Esophagus muscularis mucosa (tissue), 4 donors: ENCODE measurements at regions of chr22 and their contacts with region 1.

Region 1: DNA sequence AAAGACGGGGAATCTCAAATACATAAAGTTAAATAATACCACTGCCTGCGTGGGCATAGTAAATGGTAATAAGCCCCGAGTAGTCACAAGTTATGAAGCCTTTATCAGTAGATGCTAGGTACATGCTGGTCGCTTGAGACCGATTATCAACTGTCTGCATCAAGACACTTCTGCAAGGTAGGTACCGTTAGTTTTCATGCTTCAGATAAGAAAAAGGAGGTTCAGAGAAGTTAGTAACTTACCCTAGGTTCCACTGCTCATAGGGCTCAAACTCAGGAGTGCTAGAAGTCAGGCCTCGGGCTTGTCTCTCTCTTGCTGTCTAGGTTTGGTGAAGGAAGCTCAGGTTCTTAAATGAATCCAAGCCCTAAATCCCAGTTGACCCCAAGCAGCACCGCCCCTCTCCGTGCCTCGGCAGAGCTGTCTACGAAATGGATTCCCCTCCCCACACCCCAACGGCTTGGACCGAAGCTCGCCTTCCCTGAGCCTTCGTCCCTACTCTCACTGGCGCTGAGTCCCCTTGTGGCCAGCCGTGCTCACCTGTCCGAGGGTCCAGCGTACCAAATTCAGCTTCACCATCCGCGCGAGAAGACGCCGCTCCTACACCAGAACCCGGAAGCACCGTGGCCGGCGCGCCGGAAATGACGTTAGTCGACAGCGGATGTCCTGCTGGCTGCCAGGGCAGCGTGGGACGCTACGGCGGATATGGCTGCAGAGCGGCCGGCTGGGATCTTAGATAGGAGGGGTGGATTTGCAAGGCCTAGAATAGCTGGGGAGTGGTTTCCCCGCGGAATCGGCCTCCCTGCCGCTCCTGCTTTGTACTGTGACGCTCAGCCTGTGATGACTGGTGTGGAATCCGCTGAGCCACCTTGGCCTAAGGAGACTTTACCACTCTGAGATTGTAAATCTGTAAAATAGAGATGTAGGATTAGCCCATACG is at the start of gene TFIP11:
- DNase-seq: peak; percentile 99
- H3K4me3 ChIP-seq: peak within 1 kb of the TSS; percentile 76 to 89 (median 88)
- H3K27ac ChIP-seq: peak within 1 kb of the TSS; percentile 77 to 87 (median 84)
- H3K4me1 ChIP-seq: peaks cover 17 to 31% (median 26%) of the 10 kb centered on the region in 4 donors
- H3K27me3 ChIP-seq: no peaks in the 10 kb centered on the region
- CTCF ChIP-seq: no peak
- EP300 ChIP-seq: no peak
- POLR2A ChIP-seq: no peak
- total RNA-seq, gene TFIP11: 17.9 to 23.5 (median 20.4) TPM

Region 2: DNA sequence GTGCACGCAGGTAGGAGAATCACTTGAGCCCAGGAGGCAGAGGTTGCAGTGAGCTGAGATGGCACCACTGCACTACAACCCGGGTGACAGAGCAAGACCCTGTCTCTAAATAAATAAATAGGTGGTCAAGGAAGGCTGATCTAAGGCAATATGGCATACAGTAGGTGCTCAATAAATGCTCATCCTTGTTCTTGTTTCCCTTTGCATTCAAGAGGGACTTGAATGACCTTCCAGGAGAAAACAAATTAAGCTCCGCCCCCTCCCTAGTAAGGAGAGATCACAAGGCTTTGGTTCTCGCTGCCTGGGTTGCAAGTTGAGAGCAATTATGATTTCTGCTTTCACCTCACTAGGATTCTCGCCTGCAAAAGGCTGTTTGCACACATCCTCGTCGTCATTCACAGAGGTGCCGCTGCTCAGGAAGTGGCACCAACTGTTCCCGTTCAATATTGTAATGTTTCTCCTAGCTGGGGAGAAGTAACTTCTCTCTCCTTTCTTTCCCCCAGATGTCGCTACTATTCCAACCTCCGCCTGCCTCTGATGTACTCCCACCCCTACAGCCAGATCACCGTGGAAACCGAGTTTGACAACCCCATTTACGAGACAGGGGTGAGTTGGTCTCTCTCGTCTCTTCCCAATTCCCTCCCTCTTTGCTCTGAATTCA is 134.8 kb before region 1 on chr22:
- intact Hi-C with region 1: no loop called
- DNase-seq: no peak
- H3K4me3 ChIP-seq: no peak overlapping the region
- H3K27ac ChIP-seq: no peak overlapping the region
- H3K4me1 ChIP-seq: no peaks in the 10 kb centered on the region
- H3K27me3 ChIP-seq: peaks cover 0 to 74% (median 15%) of the 10 kb centered on the region in 4 donors
- CTCF ChIP-seq: no peak
- EP300 ChIP-seq: no peak
- POLR2A ChIP-seq: no peak

Region 3: GRCh38 chr22:26445577-26446275 is 66.4 kb before region 1 on chr22:
- intact Hi-C with region 1: no loop called
- DNase-seq: no peak
- H3K4me3 ChIP-seq: no peak overlapping the region
- H3K27ac ChIP-seq: no peak overlapping the region
- H3K4me1 ChIP-seq: peaks cover 0 to 17% (median 9%) of the 10 kb centered on the region in 4 donors
- H3K27me3 ChIP-seq: no peaks in the 10 kb centered on the region
- CTCF ChIP-seq: no peak
- EP300 ChIP-seq: no peak
- POLR2A ChIP-seq: no peak

Region 4: GRCh38 chr22:26483439-26484359 is 28.4 kb before region 1 on chr22 and contains the starts of genes HPS4 and SRRD:
- intact Hi-C with region 1: loop called (anchors 2 kb)
- DNase-seq: peak; percentile 95
- H3K4me3 ChIP-seq: peak within 1 kb of the TSS; percentile 76 to 98 (median 97)
- H3K27ac ChIP-seq: peak within 1 kb of the TSS; percentile 88 to 96 (median 94)
- H3K4me1 ChIP-seq: peaks cover 51 to 68% (median 61%) of the 10 kb centered on the region in 4 donors
- H3K27me3 ChIP-seq: no peaks in the 10 kb centered on the region
- CTCF ChIP-seq: peak in 1 of 3 experiments; percentile 26
- EP300 ChIP-seq: no peak
- POLR2A ChIP-seq: peak; percentile 83
- total RNA-seq, gene HPS4: 15.4 to 17.9 (median 17.5) TPM
- total RNA-seq, gene SRRD: 12.7 to 20.5 (median 15.2) TPM

Region 5: GRCh38 chr22:26573026-26573662 is 61.0 kb after region 1 on chr22:
- intact Hi-C with region 1: no loop called
- DNase-seq: no peak
- H3K4me3 ChIP-seq: no peak overlapping the region
- H3K27ac ChIP-seq: peak overlapping the region in 2 of 4 donors; percentile 27 to 44
- H3K4me1 ChIP-seq: peaks cover 0 to 27% (median 7%) of the 10 kb centered on the region in 4 donors
- H3K27me3 ChIP-seq: no peaks in the 10 kb centered on the region
- CTCF ChIP-seq: no peak
- EP300 ChIP-seq: no peak
- POLR2A ChIP-seq: no peak

Region 6: DNA sequence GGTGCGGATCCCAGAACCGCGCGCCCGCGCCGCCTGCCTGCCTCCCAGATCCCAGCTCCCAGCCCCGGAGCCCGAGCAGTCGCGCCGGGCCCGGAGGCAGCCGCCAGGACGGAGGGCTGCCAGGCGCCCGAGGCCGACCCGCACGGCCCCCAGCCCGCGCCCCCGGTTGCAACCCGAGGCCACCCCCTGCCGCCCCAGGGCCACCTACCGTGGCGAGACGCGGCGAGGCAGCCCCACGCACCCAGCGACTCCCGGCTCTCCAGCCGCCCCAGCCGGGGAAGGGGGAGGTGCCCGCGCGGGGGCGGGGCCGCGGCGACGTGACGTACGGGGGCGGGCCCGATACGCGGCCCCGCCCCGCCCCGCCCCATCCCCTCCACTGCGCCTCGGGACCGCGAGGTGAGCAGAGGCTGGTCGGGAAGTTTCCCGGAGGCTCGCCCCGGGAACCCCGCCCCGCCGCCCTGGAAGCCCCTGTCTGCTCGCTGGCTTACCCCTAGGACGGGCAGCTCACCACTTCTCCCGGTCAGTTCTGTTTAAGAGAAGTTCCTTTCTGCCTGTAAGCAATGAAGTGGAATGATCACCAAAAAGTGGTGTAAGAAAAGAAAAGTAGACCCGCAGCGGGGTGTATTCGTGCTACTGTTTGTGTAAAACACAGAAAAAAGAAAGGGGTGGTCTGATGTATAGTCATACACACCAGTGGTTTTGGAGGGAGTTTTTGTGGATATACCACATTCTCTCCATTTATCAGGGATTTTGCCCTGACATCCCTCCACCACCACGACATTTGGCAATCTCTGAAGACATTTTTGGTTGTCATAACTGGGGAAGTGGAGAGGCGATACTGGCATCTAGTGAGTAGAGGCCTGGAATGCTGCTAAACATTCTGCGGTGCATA is 78.0 kb after region 1 on chr22 and contains the start of gene TPST2:
- intact Hi-C with region 1: loop called (anchors 5 kb)
- DNase-seq: peak; percentile 94
- H3K4me3 ChIP-seq: peak within 1 kb of the TSS; percentile 74 to 93 (median 80)
- H3K27ac ChIP-seq: peak within 1 kb of the TSS; percentile 76 to 88 (median 80)
- H3K4me1 ChIP-seq: peaks cover 28 to 32% (median 29%) of the 10 kb centered on the region in 4 donors
- H3K27me3 ChIP-seq: peaks cover 0 to 5% (median 0%) of the 10 kb centered on the region in 4 donors
- CTCF ChIP-seq: peak in 2 of 3 experiments; percentile 4 to 7
- EP300 ChIP-seq: no peak
- POLR2A ChIP-seq: no peak
- total RNA-seq, gene TPST2: 22.0 to 30.9 (median 28.7) TPM

Region 7: DNA sequence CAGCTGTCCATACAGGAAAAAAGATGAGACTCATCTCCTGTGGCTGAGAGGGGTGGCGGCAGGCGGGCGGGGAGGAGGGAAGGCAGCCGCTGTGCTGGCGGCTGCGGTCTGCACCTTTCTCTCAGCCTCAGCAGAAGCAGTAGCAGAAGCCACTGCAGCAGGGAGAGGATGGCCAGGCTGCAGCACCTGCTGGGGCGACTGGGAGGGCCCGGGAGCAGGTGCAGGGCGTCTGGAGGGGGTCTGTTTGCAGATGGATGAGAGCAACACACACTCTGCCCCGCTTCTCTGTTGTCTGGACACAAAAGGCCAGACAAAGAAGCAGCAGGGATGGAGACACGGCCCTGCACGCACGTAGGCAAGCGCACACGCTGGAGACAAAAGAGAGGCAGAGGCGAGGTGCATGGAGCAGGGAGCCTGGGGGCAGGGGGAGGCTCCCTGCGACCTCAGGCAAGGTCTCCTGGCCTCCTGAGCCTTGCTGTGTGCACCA is 135.9 kb after region 1 on chr22:
- intact Hi-C with region 1: no loop called
- DNase-seq: no peak
- H3K4me3 ChIP-seq: no peak overlapping the region
- H3K27ac ChIP-seq: no peak overlapping the region
- H3K4me1 ChIP-seq: peaks cover 3 to 14% (median 12%) of the 10 kb centered on the region in 4 donors
- H3K27me3 ChIP-seq: peaks cover 0 to 60% (median 2%) of the 10 kb centered on the region in 4 donors
- CTCF ChIP-seq: no peak
- EP300 ChIP-seq: no peak
- POLR2A ChIP-seq: no peak